B cell (primary cell): ENCODE measurements at regions of chr2 and their contacts with region 1.

Region 1: GRCh38 chr2:191566344-191566743 is 111.6 kb upstream of the NABP1 start:
- DNase-seq: peak; percentile 78
- ATAC-seq: peak; percentile 76
- H3K4me3 ChIP-seq: no peak overlapping the region
- H3K4me3 Mint-ChIP-seq: no peak overlapping the region
- H3K27ac ChIP-seq: no peak overlapping the region
- H3K27ac Mint-ChIP-seq: no peak overlapping the region
- H3K4me1 ChIP-seq: peaks cover 7 to 12% of the 10 kb centered on the region in 2 donors
- H3K4me1 Mint-ChIP-seq: peaks cover 12% of the 10 kb centered on the region
- H3K27me3 ChIP-seq: no peaks in the 10 kb centered on the region
- H3K27me3 Mint-ChIP-seq: peaks cover 24% of the 10 kb centered on the region
- CTCF ChIP-seq: peak; percentile 86

Region 2: DNA sequence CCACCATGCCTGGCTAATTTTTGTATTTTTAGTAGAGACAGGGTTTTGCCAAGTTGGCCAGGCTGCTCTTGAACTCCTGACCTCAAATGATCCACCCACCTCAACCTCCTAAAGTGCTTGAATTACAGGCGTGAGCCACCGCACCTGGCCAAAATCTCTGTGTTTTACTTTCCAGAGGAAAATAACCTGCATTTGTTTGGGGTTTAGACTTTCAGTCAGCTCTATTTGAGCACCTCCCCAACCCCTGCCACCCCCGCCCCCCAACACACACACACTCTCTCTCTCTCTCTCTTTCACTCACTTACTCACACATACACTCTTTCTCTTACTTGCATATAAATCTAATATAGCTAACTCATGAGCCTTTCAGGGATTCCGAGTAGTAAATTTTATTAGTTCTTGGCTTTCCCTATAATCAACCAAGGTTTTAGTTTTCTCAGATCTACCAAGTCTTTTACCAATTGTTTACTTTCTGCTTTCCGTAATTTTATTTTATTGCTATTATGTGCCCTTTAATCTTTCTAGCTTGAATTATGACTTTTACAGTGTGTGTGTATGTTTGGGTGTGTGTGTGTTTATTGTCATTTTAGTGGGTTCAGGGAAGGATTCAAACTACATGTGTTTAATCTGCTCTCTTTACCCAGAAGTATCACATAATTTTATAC is 1133.6 kb before region 1 on chr2:
- CTCF ChIA-PET with region 1: no interaction called
- POLR2A ChIA-PET with region 1: no interaction called
- intact Hi-C with region 1: no loop called
- DNase-seq: no peak
- ATAC-seq: no peak
- H3K4me3 ChIP-seq: no peak overlapping the region
- H3K4me3 Mint-ChIP-seq: no peak overlapping the region
- H3K27ac ChIP-seq: no peak overlapping the region
- H3K27ac Mint-ChIP-seq: no peak overlapping the region
- H3K4me1 ChIP-seq: peaks cover 6 to 8% of the 10 kb centered on the region in 2 donors
- H3K4me1 Mint-ChIP-seq: peaks cover 33% of the 10 kb centered on the region
- H3K27me3 ChIP-seq: no peaks in the 10 kb centered on the region
- H3K27me3 Mint-ChIP-seq: no peaks in the 10 kb centered on the region
- CTCF ChIP-seq: no peak

Region 3: GRCh38 chr2:191304939-191305875 is 261.1 kb before region 1 on chr2:
- CTCF ChIA-PET with region 1: no interaction called
- POLR2A ChIA-PET with region 1: no interaction called
- intact Hi-C with region 1: no loop called
- DNase-seq: no peak
- ATAC-seq: no peak
- H3K4me3 ChIP-seq: no peak overlapping the region
- H3K4me3 Mint-ChIP-seq: no peak overlapping the region
- H3K27ac ChIP-seq: no peak overlapping the region
- H3K27ac Mint-ChIP-seq: no peak overlapping the region
- H3K4me1 ChIP-seq: peaks cover 4 to 8% of the 10 kb centered on the region in 2 donors
- H3K4me1 Mint-ChIP-seq: peaks cover 8% of the 10 kb centered on the region
- H3K27me3 ChIP-seq: no peaks in the 10 kb centered on the region
- H3K27me3 Mint-ChIP-seq: peaks cover 7% of the 10 kb centered on the region
- CTCF ChIP-seq: no peak

Region 4: GRCh38 chr2:191521608-191522208 is 44.6 kb before region 1 on chr2:
- CTCF ChIA-PET with region 1: no interaction called
- POLR2A ChIA-PET with region 1: no interaction called
- intact Hi-C with region 1: no loop called
- DNase-seq: peak; percentile 37
- ATAC-seq: peak; percentile 33
- H3K4me3 ChIP-seq: no peak overlapping the region
- H3K4me3 Mint-ChIP-seq: no peak overlapping the region
- H3K27ac ChIP-seq: no peak overlapping the region
- H3K27ac Mint-ChIP-seq: no peak overlapping the region
- H3K4me1 ChIP-seq: no peaks in the 10 kb centered on the region
- H3K4me1 Mint-ChIP-seq: no peaks in the 10 kb centered on the region
- H3K27me3 ChIP-seq: peaks cover 0 to 4% (median 0%) of the 10 kb centered on the region in 4 experiments
- H3K27me3 Mint-ChIP-seq: peaks cover 4% of the 10 kb centered on the region
- CTCF ChIP-seq: peak; percentile 92

Region 5: GRCh38 chr2:191555092-191555742 is 11.1 kb before region 1 on chr2:
- CTCF ChIA-PET with region 1: interaction called, 51 read pairs
- POLR2A ChIA-PET with region 1: no interaction called
- intact Hi-C with region 1: no loop called
- DNase-seq: peak; percentile 84
- ATAC-seq: peak; percentile 78
- H3K4me3 ChIP-seq: no peak overlapping the region
- H3K4me3 Mint-ChIP-seq: no peak overlapping the region
- H3K27ac ChIP-seq: no peak overlapping the region
- H3K27ac Mint-ChIP-seq: no peak overlapping the region
- H3K4me1 ChIP-seq: peaks cover 0 to 3% of the 10 kb centered on the region in 2 donors
- H3K4me1 Mint-ChIP-seq: peaks cover 3% of the 10 kb centered on the region
- H3K27me3 ChIP-seq: peaks cover 0 to 4% (median 0%) of the 10 kb centered on the region in 4 experiments
- H3K27me3 Mint-ChIP-seq: peaks cover 15% of the 10 kb centered on the region
- CTCF ChIP-seq: peak; percentile 86

Region 6: DNA sequence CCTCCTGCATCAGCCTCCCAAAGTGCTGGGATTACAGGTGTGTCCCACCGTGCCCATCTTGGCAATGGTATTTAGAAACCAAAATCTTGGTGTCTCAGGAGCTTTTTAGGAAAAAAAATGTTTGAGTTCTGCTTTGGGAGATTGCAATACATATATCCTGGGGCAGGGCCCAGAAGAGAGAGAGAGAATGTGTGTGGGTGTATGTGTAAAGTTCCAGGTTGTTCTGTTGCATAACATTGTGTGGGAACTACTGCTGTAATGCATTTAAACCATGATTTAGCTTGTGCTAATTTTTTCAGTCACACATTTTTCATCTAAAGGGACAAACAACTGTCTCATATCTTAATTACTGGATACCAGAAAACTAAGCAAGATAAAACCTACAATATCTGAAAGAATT is 40.7 kb after region 1 on chr2:
- CTCF ChIA-PET with region 1: interaction called, 4 read pairs
- POLR2A ChIA-PET with region 1: no interaction called
- intact Hi-C with region 1: loop called (anchors 5 kb)
- DNase-seq: no peak
- ATAC-seq: no peak
- H3K4me3 ChIP-seq: no peak overlapping the region
- H3K4me3 Mint-ChIP-seq: no peak overlapping the region
- H3K27ac ChIP-seq: no peak overlapping the region
- H3K27ac Mint-ChIP-seq: no peak overlapping the region
- H3K4me1 ChIP-seq: peaks cover 9 to 11% of the 10 kb centered on the region in 2 donors
- H3K4me1 Mint-ChIP-seq: peaks cover 11% of the 10 kb centered on the region
- H3K27me3 ChIP-seq: no peaks in the 10 kb centered on the region
- H3K27me3 Mint-ChIP-seq: no peaks in the 10 kb centered on the region
- CTCF ChIP-seq: no peak

Region 7: GRCh38 chr2:191626497-191627151 is 60.3 kb after region 1 on chr2:
- CTCF ChIA-PET with region 1: interaction called, 10 read pairs
- POLR2A ChIA-PET with region 1: no interaction called
- intact Hi-C with region 1: no loop called
- DNase-seq: no peak
- ATAC-seq: no peak
- H3K4me3 ChIP-seq: no peak overlapping the region
- H3K4me3 Mint-ChIP-seq: no peak overlapping the region
- H3K27ac ChIP-seq: no peak overlapping the region
- H3K27ac Mint-ChIP-seq: no peak overlapping the region
- H3K4me1 ChIP-seq: peaks cover 12 to 20% of the 10 kb centered on the region in 2 donors
- H3K4me1 Mint-ChIP-seq: peaks cover 31% of the 10 kb centered on the region
- H3K27me3 ChIP-seq: no peaks in the 10 kb centered on the region
- H3K27me3 Mint-ChIP-seq: no peaks in the 10 kb centered on the region
- CTCF ChIP-seq: no peak

Region 8: GRCh38 chr2:191691016-191691735 is 124.8 kb after region 1 on chr2:
- CTCF ChIA-PET with region 1: interaction called, 48 read pairs
- POLR2A ChIA-PET with region 1: no interaction called
- intact Hi-C with region 1: loop called (anchors 1 kb)
- DNase-seq: peak; percentile 83
- ATAC-seq: peak; percentile 87
- H3K4me3 ChIP-seq: no peak overlapping the region
- H3K4me3 Mint-ChIP-seq: no peak overlapping the region
- H3K27ac ChIP-seq: no peak overlapping the region
- H3K27ac Mint-ChIP-seq: no peak overlapping the region
- H3K4me1 ChIP-seq: peaks cover 3 to 7% of the 10 kb centered on the region in 2 donors
- H3K4me1 Mint-ChIP-seq: peaks cover 20% of the 10 kb centered on the region
- H3K27me3 ChIP-seq: no peaks in the 10 kb centered on the region
- H3K27me3 Mint-ChIP-seq: no peaks in the 10 kb centered on the region
- CTCF ChIP-seq: peak; percentile 86

Region 9: GRCh38 chr2:191706791-191707190 is 140.4 kb after region 1 on chr2:
- CTCF ChIA-PET with region 1: interaction called, 10 read pairs
- POLR2A ChIA-PET with region 1: no interaction called
- intact Hi-C with region 1: no loop called
- DNase-seq: no peak
- ATAC-seq: no peak
- H3K4me3 ChIP-seq: no peak overlapping the region
- H3K4me3 Mint-ChIP-seq: no peak overlapping the region
- H3K27ac ChIP-seq: no peak overlapping the region
- H3K27ac Mint-ChIP-seq: no peak overlapping the region
- H3K4me1 ChIP-seq: no peaks in the 10 kb centered on the region
- H3K4me1 Mint-ChIP-seq: peaks cover 3% of the 10 kb centered on the region
- H3K27me3 ChIP-seq: no peaks in the 10 kb centered on the region
- H3K27me3 Mint-ChIP-seq: no peaks in the 10 kb centered on the region
- CTCF ChIP-seq: no peak